ENCODE measurements at regions of chr1 and their contacts with region 1.

Region 1: GRCh38 chr1:21176586-21177555 is at the start of gene EIF4G3:
- DNase-seq: peak; percentile 99
- H3K4me3 Mint-ChIP-seq: peak within 1 kb of the TSS; percentile 89
- H3K27ac Mint-ChIP-seq: peak within 1 kb of the TSS; percentile 94
- H3K4me1 Mint-ChIP-seq: peaks cover 25% of the 10 kb centered on the region
- H3K27me3 Mint-ChIP-seq: no peaks in the 10 kb centered on the region
- total RNA-seq, gene EIF4G3: 67.5 and 69.3 TPM in 2 replicates

Region 2: DNA sequence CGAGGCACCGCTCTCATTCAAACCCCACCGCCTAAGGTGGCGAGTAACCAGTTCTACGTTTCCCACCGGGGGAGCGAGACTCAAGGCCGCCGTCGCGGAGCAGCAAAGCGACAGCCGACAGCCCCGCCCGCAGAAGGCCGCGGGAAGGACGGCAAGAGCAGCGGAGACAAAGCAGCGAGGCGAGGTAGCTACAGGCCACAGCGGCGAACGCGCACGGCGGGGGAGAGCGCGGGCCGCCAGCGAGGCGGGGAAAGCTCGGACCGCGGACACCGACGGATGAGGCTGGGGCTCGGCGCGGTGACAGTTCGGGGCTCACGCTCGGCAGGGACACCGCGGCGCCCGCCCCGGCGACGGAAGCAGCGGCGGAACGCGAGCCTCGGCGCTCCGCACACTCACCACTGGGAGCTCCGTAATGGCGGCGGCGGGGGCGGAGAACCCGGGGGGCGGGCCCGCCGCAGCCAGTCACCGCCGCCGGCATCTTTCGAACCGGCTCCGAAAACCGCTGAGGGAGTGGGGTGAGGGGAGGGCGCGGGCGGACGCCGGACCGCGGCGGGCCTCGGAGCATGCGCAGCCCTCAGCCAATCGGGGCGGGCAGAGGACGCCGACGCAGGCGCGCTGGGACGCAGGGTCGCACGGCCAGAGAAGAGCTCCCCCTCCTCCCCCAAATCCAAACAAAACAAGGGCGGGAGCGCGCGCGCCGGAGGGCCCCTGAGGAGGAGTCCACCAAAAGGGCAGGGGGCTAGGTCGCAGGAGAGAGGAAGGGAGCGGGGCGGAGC is 390.4 kb before region 1 on chr1:
- intact Hi-C with region 1: loop called (anchors 1 kb)
- DNase-seq: peak; percentile 95
- H3K4me3 Mint-ChIP-seq: peak overlapping the region; percentile 91
- H3K27ac Mint-ChIP-seq: peak overlapping the region; percentile 97
- H3K4me1 Mint-ChIP-seq: peaks cover 26% of the 10 kb centered on the region
- H3K27me3 Mint-ChIP-seq: peaks cover 5% of the 10 kb centered on the region

Region 3: DNA sequence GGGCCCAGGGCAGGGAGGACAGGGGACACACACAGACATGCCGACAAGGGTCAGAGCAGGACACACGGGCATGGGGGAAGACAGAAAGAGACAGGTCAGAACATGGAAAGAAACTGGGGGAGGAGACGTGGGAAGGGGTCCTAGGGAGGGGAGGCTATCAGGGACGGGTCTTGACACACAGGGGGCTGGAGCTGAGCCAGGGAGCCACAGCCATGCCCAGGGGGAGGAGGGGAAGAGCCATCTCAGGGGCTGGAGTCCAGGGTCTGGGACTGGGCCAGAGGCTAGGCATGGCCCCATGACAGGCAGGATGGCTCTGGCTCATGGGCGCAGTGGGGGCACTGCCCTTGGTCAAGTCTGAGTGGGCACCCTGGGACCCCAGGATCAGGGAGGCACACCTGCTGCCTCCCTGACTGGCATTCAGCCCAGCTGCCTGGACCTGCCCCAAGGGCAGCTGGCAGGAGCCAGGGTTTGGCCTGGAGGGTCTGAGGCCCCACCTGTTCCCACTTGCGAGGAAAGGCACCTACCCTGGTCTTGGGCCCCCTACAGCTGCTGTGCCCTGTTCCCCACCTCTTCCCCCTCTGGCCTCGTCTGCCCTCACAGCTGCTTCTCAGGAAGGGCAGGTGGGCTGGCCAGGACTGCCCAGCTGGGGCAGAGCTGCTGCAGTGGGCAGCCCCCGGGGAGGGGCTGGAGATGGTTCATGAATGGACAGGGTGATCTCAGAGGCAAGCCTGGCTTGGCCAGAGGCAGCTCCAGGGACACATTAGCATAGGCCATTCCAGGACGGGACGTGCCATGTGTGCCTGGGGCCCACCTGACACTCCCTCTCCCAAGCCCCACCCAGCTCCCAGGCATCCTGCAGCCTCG is 717.4 kb after region 1 on chr1:
- intact Hi-C with region 1: no loop called
- DNase-seq: no peak
- H3K4me3 Mint-ChIP-seq: no peak overlapping the region
- H3K27ac Mint-ChIP-seq: no peak overlapping the region
- H3K4me1 Mint-ChIP-seq: no peaks in the 10 kb centered on the region
- H3K27me3 Mint-ChIP-seq: peaks cover 2% of the 10 kb centered on the region

Measured in activated T-helper 1 cell treated with anti-CD3 and anti-CD28 coated beads, Interleukin-12 subunit alpha, Interleukin-12 subunit beta, Interleukin-2, Interleukin-4 antibody, amounts not matched to agents 30 ng/mL and 10 ng/mL and 1 ng/mL, durations not matched to agents 14 hours and 24 hours and 36 hours (primary cell).